HCT116 (cell line): ENCODE measurements at regions of chr12 and their contacts with region 1.

Region 1: GRCh38 chr12:80412369-80412953 is 31.6 kb upstream of the PTPRQ start:
- DNase-seq: peak; percentile 45
- ATAC-seq: peak; percentile 70
- H3K4me3 ChIP-seq: no peak overlapping the region
- H3K27ac ChIP-seq: no peak overlapping the region
- H3K4me1 ChIP-seq: no peaks in the 10 kb centered on the region
- H3K27me3 ChIP-seq: peaks cover 7% of the 10 kb centered on the region; the same call in 1 of the 2 replicates
- CTCF ChIP-seq: peak; percentile 59 to 66 (median 60); a peak in 5 of 6 replicates
- POLR2A ChIP-seq: no peak
- RAD21 ChIP-seq: peak; percentile 77

Region 2: GRCh38 chr12:80101126-80101525 is 311.3 kb before region 1 on chr12:
- CTCF ChIA-PET with region 1: no interaction called
- POLR2A ChIA-PET with region 1: no interaction called
- RAD21 ChIA-PET with region 1: no interaction called
- intact Hi-C with region 1: no loop called
- DNase-seq: no peak
- ATAC-seq: no peak
- H3K4me3 ChIP-seq: no peak overlapping the region
- H3K27ac ChIP-seq: no peak overlapping the region
- H3K4me1 ChIP-seq: no peaks in the 10 kb centered on the region
- H3K27me3 ChIP-seq: no peaks in the 10 kb centered on the region
- CTCF ChIP-seq: no peak
- POLR2A ChIP-seq: no peak
- RAD21 ChIP-seq: no peak

Region 3: DNA sequence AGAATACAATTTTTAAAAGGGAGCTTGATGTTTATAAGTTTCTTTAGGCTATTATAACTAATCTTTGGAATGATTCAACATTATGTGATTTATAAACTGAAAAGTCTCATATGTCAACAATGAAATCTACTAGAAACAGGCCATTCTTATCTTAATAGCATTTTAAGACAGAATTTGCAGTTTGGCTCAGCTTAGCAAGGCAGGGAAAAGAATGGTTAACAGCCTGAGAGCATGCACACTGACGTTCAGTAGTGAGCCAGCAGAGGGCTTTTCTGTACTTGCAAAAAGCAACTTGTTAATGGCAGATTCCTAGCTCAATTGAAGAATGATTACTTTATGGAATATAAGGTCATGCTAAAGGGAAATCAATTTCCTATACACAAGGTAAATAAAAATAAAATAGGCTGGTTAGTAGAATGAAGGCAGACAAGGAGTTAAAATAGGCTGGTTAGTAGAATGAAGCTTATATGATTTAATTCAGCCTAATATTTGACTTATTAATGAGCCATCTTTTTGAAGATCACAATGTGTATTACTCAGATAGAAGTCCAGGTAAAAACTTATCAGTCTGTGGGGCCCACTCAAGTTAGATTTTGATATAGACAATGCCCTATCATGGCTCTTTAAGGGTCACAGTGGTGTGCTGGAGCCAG is 217.3 kb before region 1 on chr12:
- CTCF ChIA-PET with region 1: no interaction called
- POLR2A ChIA-PET with region 1: no interaction called
- RAD21 ChIA-PET with region 1: no interaction called
- intact Hi-C with region 1: loop called (anchors 10 kb)
- DNase-seq: peak; percentile 36
- ATAC-seq: peak; percentile 85
- H3K4me3 ChIP-seq: no peak overlapping the region
- H3K27ac ChIP-seq: no peak overlapping the region
- H3K4me1 ChIP-seq: no peaks in the 10 kb centered on the region
- H3K27me3 ChIP-seq: no peaks in the 10 kb centered on the region
- CTCF ChIP-seq: peak; percentile 50 to 74 (median 73); a peak in 5 of 6 replicates
- POLR2A ChIP-seq: no peak
- RAD21 ChIP-seq: peak; percentile 65

Region 4: GRCh38 chr12:80400571-80400991 is 11.9 kb before region 1 on chr12:
- CTCF ChIA-PET with region 1: no interaction called
- POLR2A ChIA-PET with region 1: no interaction called
- RAD21 ChIA-PET with region 1: no interaction called
- intact Hi-C with region 1: no loop called
- DNase-seq: no peak
- ATAC-seq: no peak
- H3K4me3 ChIP-seq: no peak overlapping the region
- H3K27ac ChIP-seq: no peak overlapping the region
- H3K4me1 ChIP-seq: no peaks in the 10 kb centered on the region
- H3K27me3 ChIP-seq: no peaks in the 10 kb centered on the region
- CTCF ChIP-seq: no peak
- POLR2A ChIP-seq: no peak
- RAD21 ChIP-seq: no peak

Region 5: GRCh38 chr12:80445083-80445793 is 32.8 kb after region 1 on chr12:
- CTCF ChIA-PET with region 1: no interaction called
- POLR2A ChIA-PET with region 1: no interaction called
- RAD21 ChIA-PET with region 1: no interaction called
- intact Hi-C with region 1: no loop called
- DNase-seq: no peak
- ATAC-seq: no peak
- H3K4me3 ChIP-seq: no peak overlapping the region
- H3K27ac ChIP-seq: no peak overlapping the region
- H3K4me1 ChIP-seq: no peaks in the 10 kb centered on the region
- H3K27me3 ChIP-seq: no peaks in the 10 kb centered on the region
- CTCF ChIP-seq: no peak
- POLR2A ChIP-seq: no peak
- RAD21 ChIP-seq: no peak

Region 6: DNA sequence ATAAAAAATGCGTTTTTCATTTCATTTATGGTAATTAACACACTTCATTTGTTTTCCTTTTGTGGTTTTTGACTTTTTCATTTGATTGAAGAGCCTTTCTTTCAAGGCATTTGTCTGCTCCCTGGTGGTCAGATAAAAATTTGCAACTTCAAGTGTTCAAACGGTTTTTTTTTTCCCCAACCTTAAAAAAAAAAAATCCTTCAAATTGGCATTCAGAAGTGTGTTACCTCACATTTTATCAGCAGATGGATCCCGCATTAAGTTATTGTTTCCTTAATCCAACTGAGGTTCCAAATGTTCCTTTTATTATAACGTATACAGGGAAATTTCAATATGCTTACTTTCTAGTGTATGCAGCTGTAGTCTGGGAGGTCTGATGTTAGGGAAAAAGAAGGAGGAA is 351.4 kb after region 1 on chr12:
- CTCF ChIA-PET with region 1: no interaction called
- POLR2A ChIA-PET with region 1: no interaction called
- RAD21 ChIA-PET with region 1: no interaction called
- intact Hi-C with region 1: loop called (anchors 1 kb)
- DNase-seq: peak; percentile 39
- ATAC-seq: no peak
- H3K4me3 ChIP-seq: no peak overlapping the region
- H3K27ac ChIP-seq: no peak overlapping the region
- H3K4me1 ChIP-seq: no peaks in the 10 kb centered on the region
- H3K27me3 ChIP-seq: peaks cover 4% of the 10 kb centered on the region; the same call in 1 of the 2 replicates
- CTCF ChIP-seq: peak; percentile 41 to 62 (median 60); a peak in 5 of 6 replicates
- POLR2A ChIP-seq: no peak
- RAD21 ChIP-seq: peak; percentile 64

Region 7: DNA sequence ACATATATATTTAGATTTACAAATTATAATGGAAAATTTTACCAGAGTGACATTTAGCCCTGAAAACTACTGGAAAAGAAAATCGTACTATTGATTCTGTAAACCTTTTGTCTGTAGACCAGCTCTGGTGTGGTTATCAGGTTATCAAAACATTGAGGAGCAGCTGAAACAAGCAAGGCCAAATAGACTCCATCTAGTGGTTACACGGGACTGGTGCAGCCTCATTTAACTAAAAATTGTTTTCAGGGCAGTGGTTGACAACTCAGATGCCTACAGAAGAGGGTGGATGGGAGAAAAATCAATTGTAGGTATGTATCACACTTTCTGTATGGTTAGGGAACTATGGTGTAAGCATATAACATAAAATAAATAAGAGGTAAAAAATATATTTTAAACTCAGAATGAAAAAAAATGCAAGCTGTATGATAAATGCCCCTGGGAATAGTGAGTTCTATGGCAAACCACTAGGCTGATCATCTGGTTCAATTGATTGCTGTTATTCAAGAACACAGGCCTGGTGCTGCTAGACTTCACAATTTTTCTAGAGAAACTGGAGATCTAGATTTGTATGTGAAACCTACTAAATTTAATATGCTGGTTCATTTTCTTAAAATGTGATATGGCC is 716.6 kb after region 1 on chr12:
- CTCF ChIA-PET with region 1: no interaction called
- POLR2A ChIA-PET with region 1: no interaction called
- RAD21 ChIA-PET with region 1: no interaction called
- intact Hi-C with region 1: loop called (anchors 2 kb)
- DNase-seq: peak; percentile 22
- ATAC-seq: peak; percentile 83
- H3K4me3 ChIP-seq: no peak overlapping the region
- H3K27ac ChIP-seq: no peak overlapping the region
- H3K4me1 ChIP-seq: no peaks in the 10 kb centered on the region
- H3K27me3 ChIP-seq: no peaks in the 10 kb centered on the region
- CTCF ChIP-seq: peak; percentile 44 to 80 (median 79); a peak in 5 of 6 replicates
- POLR2A ChIP-seq: no peak
- RAD21 ChIP-seq: peak; percentile 51

Region 8: DNA sequence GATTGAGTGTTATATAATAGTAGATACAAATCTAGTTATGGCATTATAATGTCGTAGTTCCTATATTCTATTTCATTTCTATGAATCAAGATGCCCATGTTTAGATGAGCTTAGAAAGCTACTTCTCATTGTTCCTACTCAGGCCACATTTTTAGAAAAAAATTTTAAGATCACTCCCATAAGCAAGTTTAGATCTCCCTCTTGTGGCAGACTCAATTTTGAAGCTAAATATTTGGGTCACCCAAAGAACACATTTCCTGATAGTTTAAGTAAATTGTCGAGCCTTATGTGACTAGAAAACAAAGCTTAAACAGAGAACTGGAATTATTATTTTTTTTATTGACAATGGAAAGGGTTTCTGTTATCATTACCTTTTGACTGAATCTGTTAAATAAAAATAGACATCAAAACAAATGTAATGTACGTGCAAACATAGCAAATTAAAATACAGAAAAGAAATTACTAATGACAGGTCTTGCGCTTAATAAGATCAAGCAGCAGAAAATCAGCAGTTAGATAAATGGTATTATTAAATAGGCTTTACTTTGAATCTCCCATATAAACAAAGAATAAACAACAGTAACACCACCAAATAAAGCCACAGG is 845.6 kb after region 1 on chr12:
- CTCF ChIA-PET with region 1: interaction called, 6 read pairs
- POLR2A ChIA-PET with region 1: no interaction called
- RAD21 ChIA-PET with region 1: no interaction called
- intact Hi-C with region 1: loop called (anchors 2 kb)
- DNase-seq: peak; percentile 28
- ATAC-seq: peak; percentile 57; the same call in 1 of the 2 replicates
- H3K4me3 ChIP-seq: no peak overlapping the region
- H3K27ac ChIP-seq: no peak overlapping the region
- H3K4me1 ChIP-seq: no peaks in the 10 kb centered on the region
- H3K27me3 ChIP-seq: no peaks in the 10 kb centered on the region
- CTCF ChIP-seq: peak; percentile 42 to 72 (median 51); a peak in 4 of 6 replicates
- POLR2A ChIP-seq: no peak
- RAD21 ChIP-seq: peak; percentile 77